CD8-positive, alpha-beta memory T cell (primary cell): ENCODE measurements at regions of chr22 and their contacts with region 1.

Region 1: DNA sequence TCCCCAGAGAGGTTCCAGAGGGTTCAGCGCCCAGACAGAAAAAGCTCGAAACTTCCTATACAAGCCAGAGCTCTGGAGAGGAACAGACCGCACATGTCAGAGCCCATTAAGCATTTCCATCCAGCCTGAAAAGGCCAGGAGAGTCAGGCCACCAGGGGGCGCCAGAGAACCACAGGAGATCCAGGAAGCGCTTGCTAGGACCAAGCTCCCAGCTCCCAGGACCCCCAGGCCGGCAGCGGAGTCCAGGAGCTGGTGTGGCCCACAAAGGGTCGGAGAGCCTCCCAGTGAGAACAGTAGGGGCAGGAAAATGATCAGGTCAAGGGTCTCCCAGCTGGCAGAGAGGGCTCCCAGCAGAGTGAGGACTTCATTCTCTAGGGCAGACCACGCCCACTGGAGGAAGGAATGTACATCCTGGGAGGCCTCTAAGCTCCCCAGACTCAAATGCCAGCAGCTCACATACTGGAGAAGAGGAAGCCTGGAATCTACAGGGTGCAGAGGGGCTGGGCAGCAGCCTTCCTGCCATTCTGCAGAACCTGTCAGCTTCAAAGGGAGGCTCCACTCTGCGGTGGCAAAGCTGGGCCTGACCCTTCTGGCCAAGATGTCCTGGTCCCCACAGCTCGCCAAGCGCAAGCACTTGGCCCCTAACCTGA is 2.1 kb upstream of the MEI1 start:
- DNase-seq: peak; percentile 76 to 94 (median 89)
- H3K4me3 ChIP-seq: peak overlapping the region; percentile 30
- H3K4me3 Mint-ChIP-seq: peak overlapping the region in 6 of 7 donors; percentile 12 to 76 (median 58)
- H3K27ac ChIP-seq: no peak overlapping the region
- H3K27ac Mint-ChIP-seq: peak overlapping the region in 7 of 8 donors; percentile 64 to 91 (median 87)
- H3K4me1 ChIP-seq: peaks cover 7% of the 10 kb centered on the region
- H3K4me1 Mint-ChIP-seq: peaks cover 9 to 12% (median 11%) of the 10 kb centered on the region in 3 donors
- H3K27me3 ChIP-seq: no peaks in the 10 kb centered on the region
- H3K27me3 Mint-ChIP-seq: peaks cover 0 to 1% of the 10 kb centered on the region in 2 donors

Region 2: DNA sequence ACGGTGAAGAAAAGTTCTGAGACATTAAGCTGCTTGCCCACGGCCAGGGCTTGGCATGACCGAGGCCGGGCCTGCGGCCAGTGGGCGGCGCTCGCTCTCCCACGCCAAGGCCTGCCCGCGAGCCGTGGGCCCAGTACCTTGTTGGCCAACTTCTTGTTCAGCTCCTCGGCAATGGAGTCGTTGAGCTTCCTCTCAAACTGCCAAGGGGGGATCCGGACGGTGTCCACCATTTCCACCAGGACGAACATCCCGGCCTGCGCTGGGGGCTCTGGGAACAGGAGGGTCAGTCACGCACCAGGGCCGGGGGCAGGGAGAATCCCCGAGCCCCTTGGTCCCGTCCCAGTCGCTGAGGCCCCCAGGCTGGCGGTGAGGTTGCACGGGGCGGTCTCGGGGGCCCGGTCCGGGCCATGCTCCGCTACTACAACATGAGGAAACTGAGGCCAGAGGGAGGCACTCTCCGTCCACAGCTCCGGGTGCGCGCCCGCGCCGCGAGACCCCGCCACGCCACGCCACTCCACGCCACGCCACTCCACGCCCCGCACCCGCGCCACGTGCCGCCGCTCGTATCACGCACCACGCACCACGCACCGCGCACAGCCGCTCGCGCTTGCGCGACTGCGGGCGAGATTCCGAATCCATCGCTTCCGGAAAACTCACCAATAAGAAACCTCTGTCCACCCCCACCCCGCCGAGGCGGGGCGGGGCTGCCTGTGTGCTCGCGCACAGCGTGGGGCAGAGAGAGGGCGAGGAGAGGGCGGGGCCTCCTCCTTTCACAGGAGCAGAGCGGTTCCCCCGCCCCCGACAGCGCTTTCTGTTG is 153.2 kb before region 1 on chr22 and contains the start of gene POLR3H:
- CTCF ChIA-PET with region 1: no interaction called
- POLR2A ChIA-PET with region 1: no interaction called
- DNase-seq: peak; percentile 95 to 98 (median 95)
- H3K4me3 ChIP-seq: peak within 1 kb of the TSS; percentile 88
- H3K4me3 Mint-ChIP-seq: peak within 1 kb of the TSS; percentile 89 to 98 (median 96)
- H3K27ac ChIP-seq: peak within 1 kb of the TSS; percentile 75
- H3K27ac Mint-ChIP-seq: peak within 1 kb of the TSS; percentile 89 to 99 (median 96)
- H3K4me1 ChIP-seq: peaks cover 21% of the 10 kb centered on the region
- H3K4me1 Mint-ChIP-seq: peaks cover 38 to 53% (median 51%) of the 10 kb centered on the region in 3 donors
- H3K27me3 ChIP-seq: no peaks in the 10 kb centered on the region
- H3K27me3 Mint-ChIP-seq: peaks cover 0 to 5% of the 10 kb centered on the region in 2 donors
- total RNA-seq, gene POLR3H: 69.9 to 78.7 TPM

Region 3: GRCh38 chr22:41666661-41667258 is 30.5 kb before region 1 on chr22:
- CTCF ChIA-PET with region 1: interaction called, 43 read pairs
- POLR2A ChIA-PET with region 1: interaction called, 7 read pairs
- DNase-seq: peak; percentile 88 to 96 (median 93)
- H3K4me3 ChIP-seq: peak overlapping the region; percentile 54
- H3K4me3 Mint-ChIP-seq: peak overlapping the region; percentile 64 to 91 (median 88)
- H3K27ac ChIP-seq: peak overlapping the region; percentile 79
- H3K27ac Mint-ChIP-seq: peak overlapping the region; percentile 81 to 98 (median 96)
- H3K4me1 ChIP-seq: peaks cover 10% of the 10 kb centered on the region
- H3K4me1 Mint-ChIP-seq: peaks cover 13 to 15% (median 15%) of the 10 kb centered on the region in 3 donors
- H3K27me3 ChIP-seq: no peaks in the 10 kb centered on the region
- H3K27me3 Mint-ChIP-seq: no peaks in the 10 kb centered on the region

Region 4: GRCh38 chr22:41746567-41747400 is 49.5 kb after region 1 on chr22:
- CTCF ChIA-PET with region 1: interaction called, 12 read pairs
- POLR2A ChIA-PET with region 1: no interaction called
- DNase-seq: peak; percentile 26 to 70 (median 40)
- H3K4me3 ChIP-seq: no peak overlapping the region
- H3K4me3 Mint-ChIP-seq: no peak overlapping the region
- H3K27ac ChIP-seq: no peak overlapping the region
- H3K27ac Mint-ChIP-seq: peak overlapping the region in 3 of 8 donors; percentile 26 to 38 (median 38)
- H3K4me1 ChIP-seq: no peaks in the 10 kb centered on the region
- H3K4me1 Mint-ChIP-seq: peaks cover 0 to 4% (median 3%) of the 10 kb centered on the region in 3 donors
- H3K27me3 ChIP-seq: no peaks in the 10 kb centered on the region
- H3K27me3 Mint-ChIP-seq: peaks cover 3 to 28% of the 10 kb centered on the region in 2 donors

Region 5: GRCh38 chr22:41857155-41857859 is 160.1 kb after region 1 on chr22:
- CTCF ChIA-PET with region 1: interaction called, 14 read pairs
- POLR2A ChIA-PET with region 1: no interaction called
- DNase-seq: peak; percentile 59 to 77 (median 69)
- H3K4me3 ChIP-seq: no peak overlapping the region
- H3K4me3 Mint-ChIP-seq: peak overlapping the region in 6 of 7 donors; percentile 11 to 66 (median 40)
- H3K27ac ChIP-seq: no peak overlapping the region
- H3K27ac Mint-ChIP-seq: peak overlapping the region; percentile 81 to 96 (median 88)
- H3K4me1 ChIP-seq: peaks cover 31% of the 10 kb centered on the region
- H3K4me1 Mint-ChIP-seq: peaks cover 41 to 68% (median 60%) of the 10 kb centered on the region in 3 donors
- H3K27me3 ChIP-seq: no peaks in the 10 kb centered on the region
- H3K27me3 Mint-ChIP-seq: no peaks in the 10 kb centered on the region

Region 6: GRCh38 chr22:41946629-41947423 is 249.6 kb after region 1 on chr22 and contains the start of gene CENPM:
- CTCF ChIA-PET with region 1: interaction called, 91 read pairs
- POLR2A ChIA-PET with region 1: no interaction called
- DNase-seq: peak; percentile 79 to 87 (median 81)
- H3K4me3 ChIP-seq: peak within 1 kb of the TSS; percentile 89
- H3K4me3 Mint-ChIP-seq: peak within 1 kb of the TSS; percentile 89 to 97 (median 94)
- H3K27ac ChIP-seq: peak within 1 kb of the TSS; percentile 76
- H3K27ac Mint-ChIP-seq: peak within 1 kb of the TSS; percentile 32 to 92 (median 74)
- H3K4me1 ChIP-seq: peaks cover 18% of the 10 kb centered on the region
- H3K4me1 Mint-ChIP-seq: peaks cover 8 to 17% (median 10%) of the 10 kb centered on the region in 3 donors
- H3K27me3 ChIP-seq: no peaks in the 10 kb centered on the region
- H3K27me3 Mint-ChIP-seq: no peaks in the 10 kb centered on the region
- total RNA-seq, gene CENPM: 73.2 to 77.5 TPM